WTC11 (cell line): ENCODE measurements at regions of chr18 and their contacts with region 1.

Region 1: GRCh38 chr18:51016903-51017879 is 12.8 kb upstream of the SMAD4 start:
- DNase-seq: peak; percentile 38
- ATAC-seq: peak; percentile 97
- H3K4me3 Mint-ChIP-seq: no peak overlapping the region
- H3K27ac Mint-ChIP-seq: peak overlapping the region; percentile 94
- H3K4me1 Mint-ChIP-seq: peaks cover 13% of the 10 kb centered on the region
- H3K27me3 Mint-ChIP-seq: no peaks in the 10 kb centered on the region
- CTCF ChIP-seq: no peak

Region 2: DNA sequence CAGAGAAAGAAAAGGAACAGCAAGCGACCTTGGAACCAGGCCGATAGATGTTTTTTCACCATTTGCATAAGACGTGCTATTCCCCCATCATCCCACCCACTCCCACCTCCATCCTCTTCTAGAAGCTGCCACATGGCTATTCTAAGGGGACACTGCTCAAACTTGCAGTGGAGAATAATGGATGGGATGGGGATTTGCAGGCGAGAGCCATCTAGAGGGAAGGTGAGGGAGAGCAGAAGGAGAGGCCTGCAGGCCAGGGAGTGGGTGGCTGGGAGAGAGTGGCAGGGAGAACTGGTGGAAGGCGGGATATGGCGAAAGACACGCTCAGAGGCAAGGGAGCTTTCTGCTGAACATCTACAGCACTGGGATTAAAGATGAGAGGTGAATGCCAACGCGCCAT is 372.4 kb before region 1 on chr18:
- CTCF ChIA-PET with region 1: no interaction called
- POLR2A ChIA-PET with region 1: no interaction called
- DNase-seq: peak; percentile 60
- ATAC-seq: peak; percentile 99
- H3K4me3 Mint-ChIP-seq: no peak overlapping the region
- H3K27ac Mint-ChIP-seq: peak overlapping the region; percentile 4; the same call in 1 of the 2 replicates
- H3K4me1 Mint-ChIP-seq: peaks cover 11% of the 10 kb centered on the region
- H3K27me3 Mint-ChIP-seq: no peaks in the 10 kb centered on the region
- CTCF ChIP-seq: no peak

Region 3: GRCh38 chr18:50879302-50880118 is 137.7 kb before region 1 on chr18:
- CTCF ChIA-PET with region 1: no interaction called
- POLR2A ChIA-PET with region 1: no interaction called
- DNase-seq: peak; percentile 52
- ATAC-seq: peak; percentile 12
- H3K4me3 Mint-ChIP-seq: peak overlapping the region; percentile 89
- H3K27ac Mint-ChIP-seq: peak overlapping the region; percentile 88
- H3K4me1 Mint-ChIP-seq: peaks cover 20% of the 10 kb centered on the region
- H3K27me3 Mint-ChIP-seq: no peaks in the 10 kb centered on the region
- CTCF ChIP-seq: no peak

Region 4: DNA sequence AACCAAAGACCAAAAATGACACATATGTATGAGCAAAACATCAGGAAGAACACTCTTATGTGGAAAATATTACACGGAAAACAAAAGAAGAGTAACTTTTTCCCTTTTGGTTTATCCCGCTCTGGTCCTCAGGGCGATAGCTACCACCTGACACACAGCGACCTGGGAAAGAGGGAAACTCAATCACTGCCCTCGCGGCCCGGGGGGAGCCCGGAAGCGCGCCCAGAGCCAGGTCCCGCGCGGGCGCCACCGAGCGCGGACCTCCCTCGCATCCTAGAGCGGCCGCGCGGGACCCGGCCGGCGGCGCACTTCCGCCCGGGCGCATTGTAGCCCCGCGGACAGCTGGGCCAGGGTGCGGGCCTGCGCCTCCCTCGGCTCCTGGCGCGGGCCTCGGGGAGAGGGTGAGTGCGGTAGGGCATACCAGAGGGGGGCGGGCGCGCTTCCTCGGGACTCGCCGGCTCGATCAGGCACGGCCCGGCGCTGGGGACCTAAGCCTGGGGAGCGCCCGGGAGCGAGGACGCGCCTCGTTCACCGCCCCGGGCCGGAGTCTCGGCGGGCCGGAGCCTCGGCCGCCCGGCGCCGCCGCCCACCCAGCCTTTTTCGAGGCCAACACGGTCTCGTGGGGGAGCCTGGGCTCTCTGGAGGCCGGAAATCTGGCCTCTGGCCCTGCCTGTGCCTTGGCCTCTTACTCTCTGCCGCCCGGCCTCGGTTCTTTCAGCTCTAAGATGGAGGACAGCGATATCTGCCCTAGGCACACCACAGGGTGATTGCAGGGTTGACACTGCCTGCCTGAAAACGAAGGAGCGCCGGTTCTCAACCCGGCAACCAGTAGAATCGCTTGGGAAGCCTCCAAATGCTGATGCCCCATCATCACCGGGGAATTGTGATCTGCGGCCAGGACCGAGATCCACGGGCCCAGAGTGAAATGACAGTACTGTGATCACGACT is 49.2 kb before region 1 on chr18 and contains the start of gene ELAC1:
- CTCF ChIA-PET with region 1: no interaction called
- POLR2A ChIA-PET with region 1: interaction called, 10 read pairs
- DNase-seq: peak; percentile 71
- ATAC-seq: peak; percentile 92
- H3K4me3 Mint-ChIP-seq: peak within 1 kb of the TSS; percentile 83
- H3K27ac Mint-ChIP-seq: peak within 1 kb of the TSS; percentile 76; the same call in 1 of the 2 replicates
- H3K4me1 Mint-ChIP-seq: peaks cover 22% of the 10 kb centered on the region
- H3K27me3 Mint-ChIP-seq: no peaks in the 10 kb centered on the region; the same call in none of the 2 replicates
- CTCF ChIP-seq: no peak
- total RNA-seq, gene ELAC1: 3.9 to 4.3 TPM (median 4.0 TPM) in 3 replicates